Activated CD4-positive, alpha-beta memory T cell treated with anti-CD3 and anti-CD28 coated beads, Interleukin-2, amount 10 ng/mL, durations not matched to agents 7 days and 5 days (primary cell): ENCODE measurements at regions of chr2 and their contacts with region 1.

Region 1: DNA sequence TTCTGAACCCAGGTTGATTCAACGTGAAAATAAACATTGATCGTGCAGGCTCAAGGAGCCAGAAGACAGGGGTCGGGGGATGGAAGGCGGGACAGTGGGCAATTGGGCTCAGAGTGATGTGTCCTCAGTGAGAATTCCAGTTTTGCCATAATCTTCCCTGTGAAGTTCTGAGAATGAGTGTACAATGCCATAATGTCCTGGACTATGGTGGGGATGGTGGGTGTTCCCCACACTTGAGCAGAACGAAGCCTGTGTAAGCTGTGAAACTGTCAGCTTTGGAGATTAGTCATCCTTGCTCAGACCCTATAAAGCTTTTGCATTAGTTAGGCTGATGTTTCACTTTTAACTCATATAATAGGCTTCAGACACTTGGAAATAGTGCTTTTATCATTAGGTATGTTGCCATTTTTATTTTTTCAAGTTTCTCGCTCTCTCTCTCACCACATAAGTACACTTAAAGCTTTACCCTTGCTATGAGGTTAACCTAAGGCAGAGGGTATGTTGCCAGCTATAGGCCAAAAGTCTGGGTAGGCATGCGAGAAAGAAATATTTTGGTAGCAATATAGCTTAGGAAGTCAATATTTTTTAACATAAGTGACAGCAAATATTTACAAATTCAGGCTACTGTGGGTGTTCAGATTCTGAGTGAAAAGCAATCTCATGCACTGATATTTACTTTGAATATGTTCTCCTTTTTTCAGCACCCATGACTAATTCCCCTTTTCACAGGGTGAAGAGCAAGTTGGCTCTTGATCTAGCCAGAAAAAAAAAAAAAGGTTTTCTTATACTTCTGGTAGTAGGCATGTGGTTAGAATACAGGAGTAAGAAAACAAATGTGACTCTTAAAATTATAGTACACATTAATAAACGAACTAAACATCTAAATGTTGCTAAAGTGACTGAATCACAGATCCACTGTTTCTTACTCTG is 47.2 kb downstream of the CDC42EP3 start:
- DNase-seq: peak; percentile 33
- H3K4me3 Mint-ChIP-seq: peak overlapping the region; percentile 28
- H3K27ac Mint-ChIP-seq: peak overlapping the region; percentile 91
- H3K4me1 Mint-ChIP-seq: peaks cover 53% of the 10 kb centered on the region
- H3K27me3 Mint-ChIP-seq: no peaks in the 10 kb centered on the region

Region 2: DNA sequence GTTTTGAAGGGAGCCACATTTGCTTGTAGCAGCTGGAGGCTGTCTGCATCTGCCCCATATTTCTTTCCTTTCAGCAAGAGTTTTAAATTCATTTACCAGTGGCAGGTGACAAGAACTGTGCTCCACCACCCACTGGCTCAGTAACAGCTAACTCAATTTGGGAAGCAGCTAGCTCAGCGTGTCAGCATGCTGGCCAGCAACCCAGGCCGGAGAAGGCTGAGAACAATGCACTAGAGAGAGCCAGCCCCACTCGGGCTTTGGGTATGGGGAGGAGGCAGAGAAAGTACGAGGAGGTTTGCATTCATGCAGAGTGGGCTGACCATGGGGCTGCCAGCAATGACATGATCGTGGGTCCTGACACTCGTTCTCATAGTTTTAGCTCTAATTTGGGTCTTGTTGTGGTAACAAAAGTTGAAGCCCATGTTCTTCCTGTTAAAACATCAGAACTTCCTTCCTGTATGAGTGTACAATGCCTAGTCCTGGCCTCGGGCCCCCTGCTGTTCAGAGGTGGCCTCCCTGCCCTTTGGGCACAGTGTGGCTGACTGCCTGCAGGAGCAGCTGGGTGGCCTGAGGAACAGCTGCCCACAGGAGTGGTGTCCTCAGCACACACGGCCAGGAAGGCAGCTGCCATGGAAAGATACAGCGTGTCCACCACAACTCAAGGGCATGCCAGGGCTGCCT is 24.2 kb after region 1 on chr2:
- CTCF ChIA-PET with region 1: interaction called, 6 read pairs
- POLR2A ChIA-PET with region 1: interaction called, 56 read pairs
- DNase-seq: peak; percentile 66
- H3K4me3 Mint-ChIP-seq: peak overlapping the region; percentile 12
- H3K27ac Mint-ChIP-seq: peak overlapping the region; percentile 91
- H3K4me1 Mint-ChIP-seq: peaks cover 92% of the 10 kb centered on the region
- H3K27me3 Mint-ChIP-seq: no peaks in the 10 kb centered on the region